ENCODE measurements at regions of chr6 and their contacts with region 1.

Region 1: DNA sequence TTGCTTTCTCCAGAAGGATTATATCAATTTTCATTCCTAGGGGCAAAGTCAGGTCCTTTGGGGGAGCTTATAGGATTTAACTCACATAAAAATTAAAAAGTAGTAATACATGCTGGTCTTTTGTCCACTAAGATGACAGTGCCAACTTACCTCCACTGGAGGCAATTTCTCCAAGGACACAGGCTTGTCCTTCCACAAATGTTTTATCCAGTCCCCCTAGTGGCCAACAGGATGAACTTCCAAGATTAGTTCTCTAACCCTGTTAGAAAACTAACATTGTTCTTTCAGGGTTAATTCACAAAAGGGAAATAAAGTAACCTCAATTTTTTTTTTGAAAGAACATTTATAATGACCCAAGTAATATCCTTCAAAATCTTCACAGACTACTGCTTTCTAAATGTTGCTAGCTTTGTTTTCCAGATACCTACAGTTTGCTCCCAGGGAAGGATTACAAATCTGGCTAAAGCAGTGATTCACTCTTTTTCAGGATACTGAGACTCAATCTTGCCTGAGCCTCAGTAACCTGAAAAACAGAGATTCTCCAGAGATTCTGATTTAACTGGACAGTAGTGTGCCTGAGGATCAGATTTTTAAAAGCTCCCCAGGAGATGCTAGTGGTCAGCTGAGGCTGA is 31.7 kb upstream of the UBR2 start:
- DNase-seq: no peak
- H3K4me3 ChIP-seq: no peak overlapping the region
- H3K27ac ChIP-seq: no peak overlapping the region
- H3K4me1 ChIP-seq: no peaks in the 10 kb centered on the region
- H3K27me3 ChIP-seq: no peaks in the 10 kb centered on the region
- CTCF ChIP-seq: peak; percentile 86

Region 2: DNA sequence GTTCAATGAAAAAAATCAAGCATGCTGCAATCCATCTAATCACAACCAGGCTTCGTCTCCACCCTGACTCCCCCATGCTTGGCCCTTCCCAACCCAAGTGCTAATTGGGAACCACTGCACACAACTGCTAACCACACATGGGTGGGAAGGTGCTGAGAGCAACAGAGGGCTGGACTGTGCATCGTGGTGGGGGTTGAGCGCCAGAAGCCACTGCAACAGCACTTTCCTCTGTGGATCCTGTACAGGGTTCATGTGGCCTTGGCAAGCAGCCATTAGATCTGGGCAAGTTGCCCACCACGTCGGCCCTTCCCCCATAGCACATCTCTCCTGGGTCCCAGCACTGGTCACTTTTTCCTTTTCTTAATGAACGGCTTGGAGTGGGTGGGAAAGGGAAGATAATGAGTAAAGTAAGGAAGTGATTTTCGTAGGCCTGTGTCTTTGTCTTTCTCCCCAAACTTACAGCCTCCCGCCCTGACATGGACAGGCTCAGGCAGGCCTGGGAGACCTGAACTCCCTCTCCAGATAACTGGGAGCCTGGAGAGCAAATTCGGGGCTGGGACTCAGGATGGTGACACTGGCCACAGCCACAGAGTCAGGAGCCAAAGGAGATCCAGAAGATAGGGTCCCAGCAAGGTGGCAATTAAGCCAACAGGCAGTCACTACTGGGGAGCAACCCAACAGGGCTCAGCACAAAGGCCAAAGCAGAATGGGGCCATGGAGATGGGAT is 280.1 kb before region 1 on chr6:
- intact Hi-C with region 1: loop called (anchors 10 kb)
- DNase-seq: peak; percentile 82
- H3K4me3 ChIP-seq: no peak overlapping the region
- H3K27ac ChIP-seq: peak overlapping the region; percentile 82
- H3K4me1 ChIP-seq: peaks cover 54% of the 10 kb centered on the region
- H3K27me3 ChIP-seq: no peaks in the 10 kb centered on the region
- CTCF ChIP-seq: no peak

Region 3: GRCh38 chr6:42710316-42710715 is 178.2 kb after region 1 on chr6:
- intact Hi-C with region 1: no loop called
- DNase-seq: no peak
- H3K4me3 ChIP-seq: no peak overlapping the region
- H3K27ac ChIP-seq: no peak overlapping the region
- H3K4me1 ChIP-seq: peaks cover 10% of the 10 kb centered on the region
- H3K27me3 ChIP-seq: no peaks in the 10 kb centered on the region
- CTCF ChIP-seq: no peak